Stomach (tissue), 19 donors: ENCODE measurements at regions of chr1 and their contacts with region 1.

Region 1: GRCh38 chr1:35564037-35564883 is 6.7 kb downstream of the NCDN start:
- DNase-seq: peak; percentile 88 to 92
- H3K4me3 ChIP-seq: no peak overlapping the region
- H3K27ac ChIP-seq: no peak overlapping the region
- H3K4me1 ChIP-seq: peaks cover 17 to 37% (median 26%) of the 10 kb centered on the region in 4 donors
- H3K27me3 ChIP-seq: peaks cover 0 to 2% (median 0%) of the 10 kb centered on the region in 3 donors
- CTCF ChIP-seq: peak in 5 of 7 experiments; percentile 56 to 78 (median 74)
- EP300 ChIP-seq: no peak
- POLR2A ChIP-seq: no peak

Region 2: DNA sequence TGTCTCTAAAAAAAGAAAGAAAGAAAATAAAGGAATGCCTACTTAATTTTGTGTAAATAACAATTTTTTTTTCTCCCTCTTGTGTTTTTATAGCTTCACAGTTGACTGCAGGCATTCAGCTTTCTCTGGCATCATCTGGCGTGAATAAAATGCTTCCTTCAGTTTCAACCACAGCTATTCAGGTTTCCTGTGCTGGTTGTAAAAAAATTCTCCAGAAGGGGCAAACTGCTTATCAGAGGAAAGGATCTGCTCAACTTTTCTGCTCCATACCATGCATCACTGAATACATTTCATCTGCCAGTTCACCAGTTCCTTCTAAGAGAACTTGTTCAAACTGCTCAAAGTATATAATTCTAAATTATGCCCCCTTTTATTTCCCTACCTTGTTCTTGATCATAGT is 467.0 kb before region 1 on chr1:
- intact Hi-C with region 1: no loop called
- DNase-seq: no peak
- H3K4me3 ChIP-seq: no peak overlapping the region
- H3K27ac ChIP-seq: no peak overlapping the region
- H3K4me1 ChIP-seq: no peaks in the 10 kb centered on the region
- H3K27me3 ChIP-seq: no peaks in the 10 kb centered on the region
- CTCF ChIP-seq: no peak
- EP300 ChIP-seq: no peak
- POLR2A ChIP-seq: no peak

Region 3: DNA sequence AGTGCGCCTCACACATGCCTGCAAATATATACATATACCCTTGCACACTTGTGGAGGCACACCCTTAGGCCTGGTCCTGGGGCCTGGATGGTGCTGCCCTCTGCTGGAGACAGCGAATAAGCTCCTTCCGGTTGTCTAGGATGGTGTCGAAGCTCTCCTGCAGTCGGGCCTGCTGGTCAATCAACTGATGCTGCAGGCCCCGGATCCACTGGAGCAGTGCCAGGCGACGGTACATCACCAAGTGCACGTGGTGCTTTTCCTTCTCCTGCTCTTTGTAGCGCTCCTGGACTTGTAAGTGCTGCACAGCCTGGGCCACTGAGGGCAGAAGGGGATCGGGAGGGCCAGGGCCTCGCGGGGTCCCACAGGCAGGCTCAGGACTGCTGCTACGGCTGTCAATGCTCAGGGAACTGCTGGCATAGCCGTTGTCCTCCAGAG is 151.3 kb after region 1 on chr1:
- intact Hi-C with region 1: loop called (anchors 5 kb)
- DNase-seq: peak; percentile 75 to 90
- H3K4me3 ChIP-seq: peak overlapping the region in 2 of 4 donors; percentile 7 to 13
- H3K27ac ChIP-seq: no peak overlapping the region
- H3K4me1 ChIP-seq: peaks cover 11 to 44% (median 41%) of the 10 kb centered on the region in 4 donors
- H3K27me3 ChIP-seq: no peaks in the 10 kb centered on the region
- CTCF ChIP-seq: peak in 5 of 7 experiments; percentile 35 to 82 (median 65)
- EP300 ChIP-seq: no peak
- POLR2A ChIP-seq: no peak